Activated naive CD4-positive, alpha-beta T cell treated with anti-CD3 and anti-CD28 coated beads, Interleukin-2, amount 10 ng/mL, durations not matched to agents 7 days and 5 days (primary cell): ENCODE measurements at regions of chr6 and their contacts with region 1.

Region 1: GRCh38 chr6:166950443-166950821 is 5.9 kb downstream of the RNASET2 start:
- DNase-seq: peak; percentile 38
- H3K4me3 Mint-ChIP-seq: peak overlapping the region; percentile 63
- H3K27ac Mint-ChIP-seq: peak overlapping the region; percentile 98
- H3K4me1 Mint-ChIP-seq: peaks cover 70% of the 10 kb centered on the region
- H3K27me3 Mint-ChIP-seq: peaks cover 4% of the 10 kb centered on the region

Region 2: GRCh38 chr6:166786704-166787293 is 163.6 kb before region 1 on chr6:
- CTCF ChIA-PET with region 1: interaction called, 11 read pairs
- DNase-seq: no peak
- H3K4me3 Mint-ChIP-seq: no peak overlapping the region
- H3K27ac Mint-ChIP-seq: no peak overlapping the region
- H3K4me1 Mint-ChIP-seq: no peaks in the 10 kb centered on the region
- H3K27me3 Mint-ChIP-seq: no peaks in the 10 kb centered on the region